Gastrocnemius medialis (tissue), 4 donors: ENCODE measurements at regions of chr12 and their contacts with region 1.

Region 1: GRCh38 chr12:124379938-124380754 is 85.3 kb downstream of the RFLNA start:
- DNase-seq: no peak
- ATAC-seq: peak; percentile 32 to 37
- H3K4me3 ChIP-seq: no peak overlapping the region
- H3K27ac ChIP-seq: peak overlapping the region; percentile 93 to 98 (median 96)
- H3K4me1 ChIP-seq: peaks cover 69% of the 10 kb centered on the region in 2 donors
- H3K27me3 ChIP-seq: no peaks in the 10 kb centered on the region
- CTCF ChIP-seq: peak; percentile 18 to 69 (median 53)
- POLR2A ChIP-seq: no peak

Region 2: GRCh38 chr12:124347716-124348357 is 32.3 kb before region 1 on chr12:
- in situ Hi-C with region 1: no loop called
- intact Hi-C with region 1: loop called (anchors 2 kb)
- DNase-seq: no peak
- ATAC-seq: peak; percentile 28 to 38
- H3K4me3 ChIP-seq: no peak overlapping the region
- H3K27ac ChIP-seq: peak overlapping the region; percentile 63 to 82 (median 72)
- H3K4me1 ChIP-seq: peaks cover 0 to 9% of the 10 kb centered on the region in 2 donors
- H3K27me3 ChIP-seq: no peaks in the 10 kb centered on the region
- CTCF ChIP-seq: peak; percentile 47 to 82 (median 67)
- POLR2A ChIP-seq: no peak

Region 3: GRCh38 chr12:124358572-124358971 is 21.6 kb before region 1 on chr12:
- in situ Hi-C with region 1: no loop called
- intact Hi-C with region 1: no loop called
- DNase-seq: no peak
- ATAC-seq: no peak
- H3K4me3 ChIP-seq: no peak overlapping the region
- H3K27ac ChIP-seq: peak overlapping the region; percentile 93 to 98 (median 97)
- H3K4me1 ChIP-seq: peaks cover 45 to 52% of the 10 kb centered on the region in 2 donors
- H3K27me3 ChIP-seq: no peaks in the 10 kb centered on the region
- CTCF ChIP-seq: no peak
- POLR2A ChIP-seq: no peak

Region 4: DNA sequence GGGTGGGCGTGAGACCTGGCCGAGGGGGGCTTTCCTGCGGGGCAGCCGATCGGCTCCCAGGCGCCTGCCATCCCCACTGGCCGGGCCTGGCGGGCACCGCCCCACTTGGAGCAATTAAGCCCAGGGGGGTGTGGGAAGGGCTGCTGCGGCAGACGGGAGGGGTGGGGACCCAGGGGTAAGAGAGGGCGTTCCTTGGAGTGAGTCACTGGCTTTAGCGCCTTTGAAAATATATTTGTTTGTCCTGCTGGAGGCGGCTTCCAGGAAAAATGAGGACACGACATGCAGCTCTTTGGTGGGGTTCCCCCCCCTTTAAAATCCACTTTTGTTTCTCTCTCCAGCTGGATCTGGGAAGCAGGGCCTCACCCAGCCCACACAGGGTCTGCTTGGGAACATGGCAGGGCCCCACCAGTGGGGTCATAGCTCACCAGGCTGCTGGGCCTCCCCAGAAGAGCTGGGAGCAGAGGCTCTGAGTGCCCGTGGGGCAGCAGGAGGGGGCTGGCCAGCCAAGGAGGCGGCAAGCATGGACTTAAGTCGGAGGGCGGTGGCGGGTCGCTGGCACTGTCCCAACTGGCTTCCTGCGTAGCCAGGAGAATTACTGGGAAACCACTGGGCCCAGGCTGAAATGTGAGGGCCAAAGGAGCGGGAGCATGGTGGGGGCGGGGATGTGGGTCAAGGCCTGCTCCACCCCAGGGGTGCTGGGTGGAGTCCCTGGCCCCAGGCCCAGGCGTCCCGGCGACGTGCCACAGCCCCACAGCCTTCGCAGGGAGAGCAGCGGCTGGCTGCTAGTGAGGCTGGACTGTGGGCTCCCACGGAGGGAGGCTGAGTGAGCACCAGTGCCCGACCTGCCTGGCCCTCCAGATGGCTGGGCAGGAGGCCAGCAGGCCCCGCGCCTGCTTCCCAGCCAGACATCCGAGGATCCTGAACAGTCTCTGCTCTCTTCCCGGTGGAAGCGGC is 42.7 kb after region 1 on chr12:
- in situ Hi-C with region 1: no loop called
- intact Hi-C with region 1: loop called (anchors 1 kb)
- DNase-seq: peak; percentile 74 to 86
- ATAC-seq: peak; percentile 75 to 76
- H3K4me3 ChIP-seq: peak overlapping the region; percentile 19 to 38 (median 26)
- H3K27ac ChIP-seq: peak overlapping the region; percentile 74 to 95 (median 82)
- H3K4me1 ChIP-seq: peaks cover 29 to 38% of the 10 kb centered on the region in 2 donors
- H3K27me3 ChIP-seq: no peaks in the 10 kb centered on the region
- CTCF ChIP-seq: no peak
- POLR2A ChIP-seq: peak in 1 of 2 donors; percentile 24